ENCODE measurements at regions of chr1 and their contacts with region 1.

Region 1: GRCh38 chr1:58755468-58755872 is 28.4 kb downstream of the JUN start:
- ATAC-seq: peak; percentile 57 to 89 (median 84)
- H3K4me3 ChIP-seq: no peak overlapping the region
- H3K27ac ChIP-seq: no peak overlapping the region
- H3K4me1 ChIP-seq: peaks cover 17 to 19% of the 10 kb centered on the region in 2 donors

Region 2: DNA sequence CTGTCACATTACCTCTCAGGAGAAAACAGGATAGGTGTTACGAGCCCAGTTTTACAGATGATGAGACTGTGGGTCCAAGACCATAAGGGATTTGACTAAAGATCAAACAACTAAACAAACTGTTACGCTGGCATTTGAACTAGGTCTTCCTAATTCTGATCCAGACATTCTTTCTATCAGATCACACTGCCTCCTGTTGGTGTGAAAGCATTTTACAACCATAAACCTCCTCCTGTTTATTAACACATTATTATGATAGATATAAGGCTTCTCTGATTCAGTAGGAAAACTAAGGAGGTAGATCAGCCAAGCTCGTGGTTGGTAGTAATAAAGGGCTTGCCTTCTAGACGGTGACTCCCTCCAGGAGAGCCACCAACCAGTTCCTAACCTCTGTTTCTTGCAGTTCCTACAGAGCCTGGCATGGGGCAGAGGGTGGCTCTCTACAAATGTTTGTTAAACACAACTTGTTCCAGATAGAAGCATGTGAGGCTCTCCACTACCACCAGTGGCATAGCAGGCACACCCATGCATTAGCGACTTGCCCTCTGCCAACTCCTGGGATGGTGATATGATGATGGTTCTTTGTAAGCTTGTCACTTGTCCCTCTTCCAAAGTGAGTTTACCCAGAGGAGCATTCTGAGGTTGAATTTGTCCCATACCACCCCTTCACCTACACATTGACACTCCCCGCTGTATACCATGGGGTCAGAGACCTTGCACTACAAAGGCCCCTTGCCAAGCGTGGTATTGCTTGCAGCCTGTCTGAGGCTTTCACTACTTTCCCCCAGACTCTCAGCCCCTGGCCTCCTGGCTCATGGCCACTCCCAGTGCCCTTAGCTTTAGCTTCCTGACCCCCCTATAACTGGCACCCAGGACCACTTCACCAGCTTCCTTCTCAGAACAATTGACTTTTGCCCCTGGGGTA is 962.9 kb after region 1 on chr1:
- in situ Hi-C with region 1: loop called in 1 of 9 experiments (anchors 25 kb)
- ATAC-seq: no peak
- H3K4me3 ChIP-seq: no peak overlapping the region
- H3K27ac ChIP-seq: no peak overlapping the region
- H3K4me1 ChIP-seq: peaks cover 10 to 17% of the 10 kb centered on the region in 2 donors

Measured in motor neuron (in vitro differentiated cells).